ENCODE measurements at regions of chr1 and their contacts with region 1.

Region 1: DNA sequence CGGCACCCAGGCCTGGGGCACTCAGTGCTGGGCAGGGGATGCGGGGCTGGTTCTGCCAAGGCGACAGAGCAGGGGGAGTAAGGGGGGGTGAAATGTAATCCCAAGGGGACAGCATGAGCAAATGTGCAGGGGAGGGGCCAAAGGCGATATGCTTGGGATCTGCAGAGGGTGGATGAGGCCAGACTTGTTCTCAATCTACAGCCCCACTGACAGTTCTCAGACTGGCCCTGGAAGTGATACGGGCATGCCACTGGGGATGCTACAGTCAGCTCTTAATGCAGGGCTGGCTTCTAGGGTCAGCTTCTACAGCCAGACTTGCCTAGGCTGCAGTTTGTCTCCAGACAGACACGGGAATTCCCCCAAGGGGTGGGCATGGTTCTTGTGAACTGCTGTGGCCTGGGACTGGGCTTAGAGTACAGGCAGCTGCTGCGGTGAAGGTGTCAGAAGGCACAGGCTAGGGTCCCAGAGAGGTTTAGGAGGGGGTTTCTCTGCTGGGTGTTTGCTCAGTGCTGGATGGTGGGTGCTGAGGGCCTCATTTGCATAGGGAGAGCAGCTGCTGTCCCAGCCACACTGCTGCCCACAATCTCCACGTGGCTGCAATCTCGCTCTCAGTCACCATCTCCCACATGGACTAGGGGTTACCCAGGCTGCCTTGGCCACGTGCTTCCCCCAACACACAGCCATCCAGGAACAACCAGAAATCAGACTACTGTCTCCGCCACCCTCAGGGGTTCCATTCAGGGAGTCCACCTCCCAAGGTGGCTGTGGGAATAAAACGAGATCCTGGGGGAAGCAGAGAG is 190.1 kb downstream of the HIVEP3 start:
- DNase-seq: peak; percentile 92
- ATAC-seq: peak; percentile 79
- H3K4me3 ChIP-seq: peak overlapping the region in 1 of 5 experiments; percentile 58
- H3K4me3 Mint-ChIP-seq: peak overlapping the region; percentile 81
- H3K27ac ChIP-seq: peak overlapping the region; percentile 86 to 94
- H3K27ac Mint-ChIP-seq: peak overlapping the region; percentile 84
- H3K4me1 ChIP-seq: peaks cover 43 to 71% of the 10 kb centered on the region in 2 donors
- H3K4me1 Mint-ChIP-seq: peaks cover 67% of the 10 kb centered on the region
- H3K27me3 ChIP-seq: no peaks in the 10 kb centered on the region
- H3K27me3 Mint-ChIP-seq: no peaks in the 10 kb centered on the region
- CTCF ChIP-seq: no peak

Region 2: GRCh38 chr1:41622859-41623723 is 105.5 kb before region 1 on chr1:
- CTCF ChIA-PET with region 1: interaction called, 4 read pairs
- POLR2A ChIA-PET with region 1: interaction called, 4 read pairs
- intact Hi-C with region 1: loop called (anchors 2 kb)
- DNase-seq: peak; percentile 74
- ATAC-seq: peak; percentile 94
- H3K4me3 ChIP-seq: peak overlapping the region in 4 of 5 experiments; percentile 16 to 56 (median 34)
- H3K4me3 Mint-ChIP-seq: peak overlapping the region; percentile 84
- H3K27ac ChIP-seq: peak overlapping the region; percentile 62 to 77
- H3K27ac Mint-ChIP-seq: peak overlapping the region; percentile 89
- H3K4me1 ChIP-seq: peaks cover 27 to 42% of the 10 kb centered on the region in 2 donors
- H3K4me1 Mint-ChIP-seq: peaks cover 65% of the 10 kb centered on the region
- H3K27me3 ChIP-seq: no peaks in the 10 kb centered on the region
- H3K27me3 Mint-ChIP-seq: no peaks in the 10 kb centered on the region
- CTCF ChIP-seq: no peak

Region 3: GRCh38 chr1:41739061-41739955 is 10.7 kb after region 1 on chr1:
- CTCF ChIA-PET with region 1: interaction called, 3 read pairs
- POLR2A ChIA-PET with region 1: interaction called, 4 read pairs
- intact Hi-C with region 1: loop called (anchors 1 kb)
- DNase-seq: peak; percentile 91
- ATAC-seq: peak; percentile 83
- H3K4me3 ChIP-seq: peak overlapping the region; percentile 4 to 47 (median 27)
- H3K4me3 Mint-ChIP-seq: peak overlapping the region; percentile 85
- H3K27ac ChIP-seq: peak overlapping the region; percentile 28 to 64
- H3K27ac Mint-ChIP-seq: peak overlapping the region; percentile 85
- H3K4me1 ChIP-seq: peaks cover 41 to 49% of the 10 kb centered on the region in 2 donors
- H3K4me1 Mint-ChIP-seq: peaks cover 81% of the 10 kb centered on the region
- H3K27me3 ChIP-seq: no peaks in the 10 kb centered on the region
- H3K27me3 Mint-ChIP-seq: no peaks in the 10 kb centered on the region
- CTCF ChIP-seq: no peak

Region 4: DNA sequence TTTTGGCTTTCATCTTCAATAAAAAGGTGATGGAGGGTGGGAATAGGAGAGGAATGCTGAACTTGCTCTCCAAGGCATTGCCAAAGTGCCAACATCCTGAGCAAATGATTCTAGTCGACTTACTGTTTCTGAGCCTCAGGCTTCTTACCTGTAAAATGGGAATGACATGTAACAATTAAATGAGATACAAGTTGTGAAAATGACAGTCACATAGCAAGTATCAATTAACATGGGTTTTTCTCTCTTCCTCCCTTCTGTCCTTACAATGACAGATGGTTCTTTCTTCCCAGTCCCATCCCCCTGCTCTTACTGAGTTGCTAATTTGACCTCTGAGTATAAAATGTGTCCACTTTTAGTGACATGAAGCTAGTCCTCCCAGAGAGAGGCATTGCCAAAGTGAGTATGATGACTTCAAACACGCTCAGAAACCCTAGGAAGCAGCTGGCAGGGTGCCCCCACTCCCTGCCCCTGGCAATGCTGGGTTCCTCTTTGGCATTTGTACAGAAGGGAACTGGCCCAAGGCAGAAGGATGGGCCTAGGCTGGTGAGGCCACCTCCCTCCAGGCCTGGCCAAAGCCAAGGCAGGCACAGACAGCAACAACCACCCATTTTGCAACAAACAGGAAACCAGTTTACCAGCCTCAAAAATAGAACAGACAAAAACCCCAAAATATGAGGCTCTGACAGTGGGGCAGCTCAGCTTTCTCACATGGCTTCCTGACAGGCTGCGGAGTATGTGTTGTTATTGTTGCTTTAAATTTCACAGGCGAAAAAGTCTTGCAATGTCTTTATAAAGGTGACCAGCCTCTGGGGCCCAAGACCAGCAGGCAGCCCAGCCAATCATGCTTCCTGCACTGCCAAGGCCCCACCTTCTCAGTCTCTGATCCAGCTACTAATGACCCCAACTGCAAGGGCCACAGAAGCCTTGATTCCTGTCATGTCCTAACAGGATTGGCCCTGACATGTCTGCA is 74.2 kb after region 1 on chr1:
- CTCF ChIA-PET with region 1: interaction called, 10 read pairs
- POLR2A ChIA-PET with region 1: no interaction called
- intact Hi-C with region 1: no loop called
- DNase-seq: peak; percentile 63
- ATAC-seq: peak; percentile 79
- H3K4me3 ChIP-seq: peak overlapping the region in 1 of 5 experiments; percentile 16
- H3K4me3 Mint-ChIP-seq: peak overlapping the region; percentile 71
- H3K27ac ChIP-seq: peak overlapping the region; percentile 56 to 70
- H3K27ac Mint-ChIP-seq: peak overlapping the region; percentile 84
- H3K4me1 ChIP-seq: peaks cover 69 to 82% of the 10 kb centered on the region in 2 donors
- H3K4me1 Mint-ChIP-seq: peaks cover 74% of the 10 kb centered on the region
- H3K27me3 ChIP-seq: no peaks in the 10 kb centered on the region
- H3K27me3 Mint-ChIP-seq: no peaks in the 10 kb centered on the region
- CTCF ChIP-seq: no peak

Region 5: GRCh38 chr1:42035830-42036604 is 307.4 kb after region 1 on chr1:
- CTCF ChIA-PET with region 1: no interaction called
- POLR2A ChIA-PET with region 1: no interaction called
- intact Hi-C with region 1: loop called (anchors 10 kb)
- DNase-seq: peak; percentile 95
- ATAC-seq: peak; percentile 94
- H3K4me3 ChIP-seq: peak overlapping the region; percentile 13 to 93 (median 83)
- H3K4me3 Mint-ChIP-seq: peak overlapping the region; percentile 72
- H3K27ac ChIP-seq: peak overlapping the region in 1 of 2 donors; percentile 34
- H3K27ac Mint-ChIP-seq: peak overlapping the region; percentile 67
- H3K4me1 ChIP-seq: peaks cover 13 to 15% of the 10 kb centered on the region in 2 donors
- H3K4me1 Mint-ChIP-seq: peaks cover 12% of the 10 kb centered on the region
- H3K27me3 ChIP-seq: peaks cover 0 to 6% (median 0%) of the 10 kb centered on the region in 4 experiments
- H3K27me3 Mint-ChIP-seq: peaks cover 13% of the 10 kb centered on the region
- CTCF ChIP-seq: no peak